MCF 10A (cell line): ENCODE measurements at regions of chr1 and their contacts with region 1.

Region 1: DNA sequence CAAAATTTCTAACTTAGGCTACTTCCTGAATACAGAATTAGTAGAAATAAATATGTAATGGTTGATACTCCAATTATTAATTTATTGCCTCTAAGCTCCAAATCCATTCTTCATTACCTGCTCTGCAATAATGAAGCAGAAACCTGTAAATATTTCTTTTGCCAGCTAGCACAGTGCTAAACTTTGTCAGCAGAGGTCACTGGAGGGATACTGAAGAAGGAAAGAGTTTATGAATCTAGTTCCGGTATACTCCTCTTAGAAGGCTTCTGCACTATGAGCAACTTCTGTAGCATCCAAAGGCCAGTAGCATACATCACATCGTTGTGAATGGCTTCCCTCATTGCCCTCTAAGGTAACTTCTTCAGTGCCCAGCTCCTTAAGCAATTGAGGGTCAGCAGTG is 81.0 kb upstream of the LHX8 start:
- DNase-seq: peak; percentile 40
- H3K4me3 Mint-ChIP-seq: no peak overlapping the region
- H3K27ac Mint-ChIP-seq: no peak overlapping the region
- H3K4me1 Mint-ChIP-seq: no peaks in the 10 kb centered on the region
- H3K27me3 Mint-ChIP-seq: no peaks in the 10 kb centered on the region
- CTCF ChIP-seq: peak; percentile 44

Region 2: GRCh38 chr1:74771913-74772515 is 281.2 kb before region 1 on chr1:
- CTCF ChIA-PET with region 1: interaction called, 4 read pairs
- POLR2A ChIA-PET with region 1: no interaction called
- intact Hi-C with region 1: loop called (anchors 1 kb)
- DNase-seq: peak; percentile 68
- H3K4me3 Mint-ChIP-seq: no peak overlapping the region
- H3K27ac Mint-ChIP-seq: no peak overlapping the region
- H3K4me1 Mint-ChIP-seq: peaks cover 4% of the 10 kb centered on the region
- H3K27me3 Mint-ChIP-seq: peaks cover 11% of the 10 kb centered on the region
- CTCF ChIP-seq: peak; percentile 51

Region 3: GRCh38 chr1:74790453-74790852 is 262.8 kb before region 1 on chr1:
- CTCF ChIA-PET with region 1: no interaction called
- POLR2A ChIA-PET with region 1: no interaction called
- intact Hi-C with region 1: no loop called
- DNase-seq: no peak
- H3K4me3 Mint-ChIP-seq: no peak overlapping the region
- H3K27ac Mint-ChIP-seq: no peak overlapping the region
- H3K4me1 Mint-ChIP-seq: no peaks in the 10 kb centered on the region
- H3K27me3 Mint-ChIP-seq: peaks cover 41% of the 10 kb centered on the region
- CTCF ChIP-seq: no peak

Region 4: DNA sequence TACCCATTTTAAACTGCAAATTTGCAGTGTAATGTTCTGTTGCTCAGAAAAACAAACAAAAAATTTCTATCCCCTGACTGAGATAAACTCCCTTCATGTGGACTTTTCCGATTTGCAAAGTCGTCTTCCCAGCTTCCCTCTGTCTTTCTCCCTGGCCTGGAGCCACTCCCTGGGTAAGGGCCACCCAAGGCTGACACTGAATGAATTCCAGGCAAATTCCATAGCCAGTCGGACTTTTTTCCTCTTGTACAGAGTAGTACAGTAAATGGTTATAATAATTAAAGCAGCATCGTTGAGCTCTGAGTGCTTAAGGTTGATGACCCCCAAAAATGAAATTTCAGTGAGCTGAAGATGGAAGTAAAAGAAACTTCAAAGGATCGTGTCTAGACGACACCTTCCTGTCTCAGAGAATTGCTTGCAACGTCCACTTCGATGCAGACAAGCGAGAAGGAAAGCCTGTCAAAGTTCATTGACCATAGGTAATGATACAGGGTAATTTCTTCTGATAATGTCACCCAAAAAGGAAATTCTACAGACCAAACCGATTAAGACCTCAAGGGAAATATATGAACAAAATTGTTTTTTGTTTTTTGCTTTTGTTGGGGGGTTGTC is 47.4 kb after region 1 on chr1:
- CTCF ChIA-PET with region 1: no interaction called
- POLR2A ChIA-PET with region 1: no interaction called
- intact Hi-C with region 1: no loop called
- DNase-seq: no peak
- H3K4me3 Mint-ChIP-seq: no peak overlapping the region
- H3K27ac Mint-ChIP-seq: no peak overlapping the region
- H3K4me1 Mint-ChIP-seq: peaks cover 6% of the 10 kb centered on the region
- H3K27me3 Mint-ChIP-seq: no peaks in the 10 kb centered on the region
- CTCF ChIP-seq: no peak

Region 5: GRCh38 chr1:75203415-75204277 is 150.4 kb after region 1 on chr1:
- CTCF ChIA-PET with region 1: interaction called, 56 read pairs
- POLR2A ChIA-PET with region 1: interaction called, 5 read pairs
- intact Hi-C with region 1: loop called (anchors 1 kb)
- DNase-seq: peak; percentile 52
- H3K4me3 Mint-ChIP-seq: no peak overlapping the region
- H3K27ac Mint-ChIP-seq: no peak overlapping the region
- H3K4me1 Mint-ChIP-seq: peaks cover 3% of the 10 kb centered on the region
- H3K27me3 Mint-ChIP-seq: peaks cover 7% of the 10 kb centered on the region
- CTCF ChIP-seq: peak; percentile 79

Region 6: GRCh38 chr1:75208862-75209261 is 155.7 kb after region 1 on chr1:
- CTCF ChIA-PET with region 1: interaction called, 56 read pairs
- POLR2A ChIA-PET with region 1: no interaction called
- intact Hi-C with region 1: no loop called
- DNase-seq: no peak
- H3K4me3 Mint-ChIP-seq: no peak overlapping the region
- H3K27ac Mint-ChIP-seq: no peak overlapping the region
- H3K4me1 Mint-ChIP-seq: no peaks in the 10 kb centered on the region
- H3K27me3 Mint-ChIP-seq: no peaks in the 10 kb centered on the region
- CTCF ChIP-seq: no peak

Region 7: GRCh38 chr1:75338616-75339483 is 285.6 kb after region 1 on chr1:
- CTCF ChIA-PET with region 1: no interaction called
- POLR2A ChIA-PET with region 1: no interaction called
- intact Hi-C with region 1: no loop called
- DNase-seq: no peak
- H3K4me3 Mint-ChIP-seq: no peak overlapping the region
- H3K27ac Mint-ChIP-seq: no peak overlapping the region
- H3K4me1 Mint-ChIP-seq: peaks cover 6% of the 10 kb centered on the region
- H3K27me3 Mint-ChIP-seq: no peaks in the 10 kb centered on the region
- CTCF ChIP-seq: no peak